ENCODE measurements at regions of chr14 and their contacts with region 1.

Region 1: DNA sequence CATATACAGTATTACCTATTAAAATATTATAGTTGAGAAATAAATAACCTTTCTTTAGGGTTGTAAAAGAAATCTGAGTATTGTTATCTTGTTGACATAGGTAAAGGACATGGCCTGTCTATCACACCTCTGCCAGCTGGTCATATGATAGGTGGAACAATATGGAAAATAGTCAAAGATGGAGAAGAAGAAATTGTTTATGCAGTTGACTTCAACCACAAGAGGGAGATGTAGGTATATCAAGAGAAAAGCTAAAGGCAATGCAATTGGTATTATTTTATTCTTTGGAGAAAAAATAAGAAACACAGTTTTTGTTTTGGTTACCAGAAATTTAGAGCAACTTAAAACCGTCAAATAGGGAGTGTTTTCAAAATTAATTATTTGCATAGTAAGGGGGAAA is 13.5 kb downstream of the CPSF2 start:
- DNase-seq: no peak
- H3K4me3 ChIP-seq: no peak overlapping the region
- H3K27ac ChIP-seq: no peak overlapping the region
- H3K4me1 ChIP-seq: no peaks in the 10 kb centered on the region
- H3K27me3 ChIP-seq: no peaks in the 10 kb centered on the region
- CTCF ChIP-seq: peak; percentile 47

Region 2: DNA sequence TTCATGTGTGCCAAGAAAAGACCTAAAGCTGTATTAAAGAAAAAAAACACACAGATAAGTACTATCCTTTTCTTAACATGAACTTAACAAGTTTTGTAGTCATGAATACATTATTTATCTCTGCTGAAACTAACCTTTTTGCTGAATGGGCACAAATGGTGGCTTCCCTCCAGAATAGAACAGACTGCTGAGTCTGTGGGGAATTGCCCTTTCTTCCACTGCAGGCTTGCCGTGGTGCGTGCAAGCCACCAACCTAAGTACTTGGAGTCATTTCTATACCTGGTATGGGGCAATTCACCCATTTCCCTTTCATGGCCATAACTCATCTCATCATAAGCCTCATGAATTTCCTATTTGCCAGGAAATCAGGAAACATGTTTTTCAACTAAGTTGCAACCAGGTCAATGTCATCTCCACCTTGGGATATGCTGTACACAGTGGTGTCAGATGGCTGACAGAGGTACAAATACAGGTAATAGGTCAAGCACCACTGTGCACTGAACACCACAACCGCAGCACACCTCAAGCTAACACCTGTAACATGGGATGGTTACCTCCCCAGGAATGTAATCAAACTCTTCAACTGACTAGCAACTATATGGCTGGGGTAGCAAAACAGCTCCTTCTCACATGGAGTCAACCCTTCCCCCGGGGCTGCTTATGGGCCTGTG is 453.2 kb before region 1 on chr14:
- intact Hi-C with region 1: no loop called
- DNase-seq: no peak
- H3K4me3 ChIP-seq: no peak overlapping the region
- H3K27ac ChIP-seq: no peak overlapping the region
- H3K4me1 ChIP-seq: no peaks in the 10 kb centered on the region
- H3K27me3 ChIP-seq: no peaks in the 10 kb centered on the region
- CTCF ChIP-seq: no peak

Region 3: GRCh38 chr14:91728616-91729183 is 406.6 kb before region 1 on chr14:
- intact Hi-C with region 1: no loop called
- DNase-seq: no peak
- H3K4me3 ChIP-seq: no peak overlapping the region
- H3K27ac ChIP-seq: no peak overlapping the region
- H3K4me1 ChIP-seq: no peaks in the 10 kb centered on the region
- H3K27me3 ChIP-seq: no peaks in the 10 kb centered on the region
- CTCF ChIP-seq: no peak

Region 4: GRCh38 chr14:92105893-92106142 is 29.4 kb before region 1 on chr14:
- intact Hi-C with region 1: no loop called
- DNase-seq: peak; percentile 64
- H3K4me3 ChIP-seq: peak overlapping the region; percentile 99
- H3K27ac ChIP-seq: peak overlapping the region; percentile 99
- H3K4me1 ChIP-seq: no peaks in the 10 kb centered on the region
- H3K27me3 ChIP-seq: no peaks in the 10 kb centered on the region
- CTCF ChIP-seq: no peak

Region 5: GRCh38 chr14:92456215-92457015 is 321.1 kb after region 1 on chr14:
- intact Hi-C with region 1: loop called (anchors 10 kb)
- DNase-seq: peak; percentile 41
- H3K4me3 ChIP-seq: no peak overlapping the region
- H3K27ac ChIP-seq: no peak overlapping the region
- H3K4me1 ChIP-seq: no peaks in the 10 kb centered on the region
- H3K27me3 ChIP-seq: no peaks in the 10 kb centered on the region
- CTCF ChIP-seq: peak; percentile 66